PC-9 (cell line): ENCODE measurements at regions of chr6 and their contacts with region 1.

Region 1: DNA sequence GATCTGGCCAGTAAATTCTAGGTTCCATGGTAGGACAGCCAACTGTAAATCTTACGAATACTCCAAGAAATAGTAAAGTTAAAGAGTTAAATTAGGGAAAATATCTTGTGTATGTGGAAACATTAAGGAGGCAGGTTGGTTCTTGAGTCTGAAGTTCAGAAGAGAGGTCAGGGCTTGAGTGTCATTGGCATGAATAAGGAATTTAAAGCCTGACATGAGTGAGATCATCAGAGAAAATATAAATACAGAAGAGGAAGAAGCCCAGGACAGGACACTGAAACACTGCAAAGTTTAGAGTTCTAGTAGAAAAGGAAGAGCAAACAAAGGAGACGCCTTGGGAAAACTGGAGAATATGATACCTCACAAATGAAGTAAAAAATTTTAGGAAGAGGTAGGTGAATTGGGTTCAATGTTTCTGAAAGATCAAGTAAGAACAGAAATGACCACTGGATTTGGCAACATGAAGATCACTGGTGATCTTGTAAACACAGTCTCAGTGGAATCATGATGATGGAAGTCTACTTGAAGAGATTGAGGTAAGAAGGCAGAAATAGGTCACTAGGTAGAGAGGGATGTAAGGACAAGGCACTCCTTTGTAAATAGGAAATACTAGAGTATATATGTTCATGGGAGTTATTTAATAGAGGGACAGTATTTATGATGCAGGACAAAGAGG is 41.6 kb upstream of the SYNCRIP start:
- DNase-seq: no peak
- H3K4me3 ChIP-seq: no peak overlapping the region
- H3K27ac ChIP-seq: no peak overlapping the region
- H3K4me1 ChIP-seq: 0 out of 2 replicates have a peak, but pooled peaks cover 5% of the 10 kb centered on the region
- H3K27me3 ChIP-seq: no peaks in the 10 kb centered on the region
- CTCF ChIP-seq: no peak

Region 2: GRCh38 chr6:85544776-85545175 is 139.5 kb before region 1 on chr6:
- CTCF ChIA-PET with region 1: no interaction called
- POLR2A ChIA-PET with region 1: no interaction called
- intact Hi-C with region 1: no loop called
- DNase-seq: no peak
- H3K4me3 ChIP-seq: no peak overlapping the region
- H3K27ac ChIP-seq: no peak overlapping the region
- H3K4me1 ChIP-seq: no peaks in the 10 kb centered on the region
- H3K27me3 ChIP-seq: no peaks in the 10 kb centered on the region
- CTCF ChIP-seq: no peak

Region 3: DNA sequence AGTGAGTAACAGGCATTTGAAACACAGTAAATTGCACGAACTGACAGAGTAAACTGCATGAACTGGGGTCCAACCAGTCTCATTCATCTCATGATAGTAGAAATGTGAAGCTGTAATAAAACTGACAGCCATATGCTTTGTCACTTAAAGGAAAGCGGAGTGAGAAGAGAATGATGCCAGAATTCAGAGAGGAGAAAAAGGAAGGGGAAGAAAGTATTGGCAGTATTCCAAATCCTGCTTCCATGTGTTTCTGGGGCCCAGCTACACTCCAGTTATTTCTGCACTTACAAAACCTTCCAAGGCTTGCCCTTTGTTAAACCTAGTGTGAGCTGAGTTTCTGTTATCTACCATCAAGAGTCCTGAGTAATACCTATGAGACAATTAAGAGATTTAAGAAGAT is 107.8 kb before region 1 on chr6:
- CTCF ChIA-PET with region 1: no interaction called
- POLR2A ChIA-PET with region 1: interaction called, 10 read pairs
- intact Hi-C with region 1: no loop called
- DNase-seq: no peak
- H3K4me3 ChIP-seq: no peak overlapping the region
- H3K27ac ChIP-seq: no peak overlapping the region
- H3K4me1 ChIP-seq: peaks cover 20% of the 10 kb centered on the region
- H3K27me3 ChIP-seq: no peaks in the 10 kb centered on the region
- CTCF ChIP-seq: no peak